Mammary epithelial cell (primary cell): ENCODE measurements at regions of chr2 and their contacts with region 1.

Region 1: GRCh38 chr2:84326831-84327432 is 132.1 kb downstream of the SUCLG1 start:
- DNase-seq: no peak
- H3K4me3 ChIP-seq: no peak overlapping the region
- H3K27ac ChIP-seq: no peak overlapping the region
- H3K4me1 ChIP-seq: no peaks in the 10 kb centered on the region
- H3K27me3 ChIP-seq: no peaks in the 10 kb centered on the region
- CTCF ChIP-seq: no peak

Region 2: GRCh38 chr2:84247542-84247951 is 79.4 kb before region 1 on chr2:
- CTCF ChIA-PET with region 1: no interaction called
- dilution Hi-C with region 1: loop called (anchors 5 kb)
- in situ Hi-C with region 1: no loop called
- intact Hi-C with region 1: no loop called
- DNase-seq: peak; percentile 84
- H3K4me3 ChIP-seq: no peak overlapping the region
- H3K27ac ChIP-seq: peak overlapping the region; percentile 37
- H3K4me1 ChIP-seq: peaks cover 12% of the 10 kb centered on the region
- H3K27me3 ChIP-seq: no peaks in the 10 kb centered on the region
- CTCF ChIP-seq: no peak

Region 3: DNA sequence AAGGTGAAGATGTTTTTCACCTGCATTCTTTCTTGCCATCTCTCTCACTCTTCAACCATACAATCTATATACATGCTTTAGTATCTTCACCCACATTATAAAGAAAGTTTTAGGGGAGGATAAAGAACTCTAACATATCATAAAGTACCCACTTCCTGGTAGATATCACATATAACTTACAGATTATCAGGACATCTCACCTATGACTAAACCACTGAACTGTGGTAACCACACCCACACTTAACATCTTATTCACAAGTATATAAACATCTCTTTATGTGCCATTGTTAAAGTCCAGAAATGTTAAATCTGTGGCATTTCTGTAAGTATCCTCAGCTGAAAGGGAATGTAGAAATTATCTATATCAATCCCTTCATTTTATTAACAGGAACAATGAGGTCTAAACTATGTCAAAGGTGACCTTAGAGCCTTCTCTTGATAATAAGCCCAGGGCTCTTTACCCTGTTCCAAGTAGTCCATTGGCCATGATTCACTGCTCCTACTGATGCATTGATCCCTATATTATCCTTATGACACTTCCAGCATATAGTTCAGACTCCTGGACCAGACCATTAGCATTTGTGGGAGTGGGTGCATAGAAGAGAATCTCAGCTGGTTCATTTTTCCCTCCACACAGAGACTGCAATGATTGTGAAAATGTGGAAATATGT is 50.2 kb before region 1 on chr2:
- CTCF ChIA-PET with region 1: no interaction called
- dilution Hi-C with region 1: loop called (anchors 5 kb)
- in situ Hi-C with region 1: no loop called
- intact Hi-C with region 1: no loop called
- DNase-seq: peak; percentile 17
- H3K4me3 ChIP-seq: no peak overlapping the region
- H3K27ac ChIP-seq: no peak overlapping the region
- H3K4me1 ChIP-seq: no peaks in the 10 kb centered on the region
- H3K27me3 ChIP-seq: no peaks in the 10 kb centered on the region
- CTCF ChIP-seq: no peak

Region 4: DNA sequence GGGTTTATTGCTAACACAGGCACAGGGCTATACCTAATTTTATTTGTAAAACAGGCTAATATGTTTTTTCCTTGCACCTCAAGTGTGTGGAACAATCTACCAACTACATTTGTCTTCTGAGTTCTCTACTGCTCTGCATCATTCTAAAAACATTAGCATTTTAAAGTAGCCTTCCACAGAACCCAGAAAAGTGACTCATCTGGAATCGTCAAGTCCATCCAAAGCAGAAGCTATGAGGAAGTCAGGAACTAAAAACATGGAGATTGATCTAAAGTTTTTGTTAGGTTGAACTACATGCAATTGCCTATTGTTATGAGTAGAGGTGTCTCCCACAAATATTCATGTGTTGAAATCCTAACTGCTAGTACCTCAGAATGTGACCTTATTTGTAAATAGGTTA is 61.2 kb after region 1 on chr2:
- CTCF ChIA-PET with region 1: no interaction called
- dilution Hi-C with region 1: loop called (anchors 5 kb)
- in situ Hi-C with region 1: no loop called
- intact Hi-C with region 1: no loop called
- DNase-seq: no peak
- H3K4me3 ChIP-seq: no peak overlapping the region
- H3K27ac ChIP-seq: no peak overlapping the region
- H3K4me1 ChIP-seq: no peaks in the 10 kb centered on the region
- H3K27me3 ChIP-seq: peaks cover 2% of the 10 kb centered on the region
- CTCF ChIP-seq: no peak

Region 5: DNA sequence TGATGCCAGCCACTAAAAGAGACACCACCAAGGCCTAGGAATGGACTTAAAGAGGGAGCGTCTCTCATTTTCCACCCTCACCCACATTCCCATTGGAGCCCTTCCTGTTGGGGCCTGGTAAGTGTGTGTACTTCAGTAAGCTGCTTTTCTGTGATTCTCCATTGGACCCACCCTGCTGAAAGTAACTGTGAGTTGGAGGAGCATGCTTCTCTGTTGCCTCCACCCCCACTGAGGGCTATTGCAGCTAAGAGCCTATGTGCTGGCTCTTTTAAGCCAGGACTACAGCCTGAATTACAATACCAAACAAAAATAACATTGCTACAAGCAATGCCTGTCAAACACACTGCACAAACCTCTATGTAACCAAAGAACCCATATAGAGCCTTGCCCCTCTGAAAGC is 472.8 kb after region 1 on chr2:
- CTCF ChIA-PET with region 1: no interaction called
- dilution Hi-C with region 1: no loop called
- in situ Hi-C with region 1: no loop called
- intact Hi-C with region 1: no loop called
- DNase-seq: no peak
- H3K4me3 ChIP-seq: no peak overlapping the region
- H3K27ac ChIP-seq: no peak overlapping the region
- H3K4me1 ChIP-seq: no peaks in the 10 kb centered on the region
- H3K27me3 ChIP-seq: no peaks in the 10 kb centered on the region
- CTCF ChIP-seq: no peak